ENCODE measurements at regions of chr5 and their contacts with region 1.

Region 1: GRCh38 chr5:44862808-44863207 is 54.1 kb downstream of the MRPS30 start:
- DNase-seq: peak; percentile 68
- ATAC-seq: peak; percentile 79
- H3K4me3 ChIP-seq: no peak overlapping the region
- H3K27ac ChIP-seq: no peak overlapping the region
- H3K4me1 ChIP-seq: no peaks in the 10 kb centered on the region
- H3K27me3 ChIP-seq: no peaks in the 10 kb centered on the region
- CTCF ChIP-seq: peak; percentile 90

Region 2: DNA sequence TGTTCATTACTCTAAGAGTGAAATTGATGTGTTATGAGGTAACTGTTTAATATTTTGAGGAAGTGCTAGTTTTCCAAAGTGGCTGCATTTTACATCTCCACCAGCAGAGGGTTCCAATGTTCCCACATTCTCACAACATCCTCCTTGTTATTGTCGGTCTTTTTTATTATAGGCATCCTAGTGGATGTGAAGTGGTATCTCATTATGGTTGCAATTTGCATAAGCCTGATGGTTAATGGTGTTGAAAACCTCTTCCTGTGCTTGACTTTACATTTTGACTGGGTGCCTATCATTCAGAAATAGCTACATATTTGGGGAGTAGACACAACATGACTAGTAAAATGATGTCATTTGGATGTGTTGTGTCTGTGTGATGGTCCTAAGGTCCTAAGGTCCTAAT is 89.6 kb after region 1 on chr5:
- CTCF ChIA-PET with region 1: interaction called, 3 read pairs
- POLR2A ChIA-PET with region 1: no interaction called
- intact Hi-C with region 1: loop called (anchors 1 kb)
- DNase-seq: peak; percentile 74
- ATAC-seq: peak; percentile 63
- H3K4me3 ChIP-seq: no peak overlapping the region
- H3K27ac ChIP-seq: no peak overlapping the region
- H3K4me1 ChIP-seq: no peaks in the 10 kb centered on the region
- H3K27me3 ChIP-seq: no peaks in the 10 kb centered on the region
- CTCF ChIP-seq: peak; percentile 93

Region 3: DNA sequence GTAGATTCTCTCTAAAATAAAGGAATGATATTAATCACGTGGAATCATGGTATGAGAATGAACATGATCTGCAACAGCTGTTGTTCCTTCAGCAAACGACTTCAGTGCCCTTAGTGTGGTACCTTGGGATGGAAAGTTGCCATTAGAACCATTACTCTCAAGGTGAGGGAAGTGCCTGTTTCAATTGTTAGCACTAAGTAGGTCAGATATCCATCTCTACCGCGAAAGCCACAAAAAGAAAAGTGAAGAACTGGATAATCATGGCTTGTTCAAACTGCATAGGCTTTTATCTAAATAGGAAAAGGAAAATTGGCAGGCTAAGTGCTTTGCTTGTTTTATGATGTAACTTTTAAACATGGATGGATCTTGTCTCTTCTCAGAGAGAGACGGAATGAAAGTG is 326.7 kb after region 1 on chr5:
- CTCF ChIA-PET with region 1: no interaction called
- POLR2A ChIA-PET with region 1: no interaction called
- intact Hi-C with region 1: loop called (anchors 10 kb)
- DNase-seq: no peak
- ATAC-seq: no peak
- H3K4me3 ChIP-seq: no peak overlapping the region
- H3K27ac ChIP-seq: no peak overlapping the region
- H3K4me1 ChIP-seq: no peaks in the 10 kb centered on the region
- H3K27me3 ChIP-seq: no peaks in the 10 kb centered on the region
- CTCF ChIP-seq: no peak

Region 4: GRCh38 chr5:45639038-45639437 is 776.2 kb after region 1 on chr5:
- CTCF ChIA-PET with region 1: no interaction called
- POLR2A ChIA-PET with region 1: no interaction called
- intact Hi-C with region 1: loop called (anchors 5 kb)
- DNase-seq: peak; percentile 36
- ATAC-seq: no peak
- H3K4me3 ChIP-seq: no peak overlapping the region
- H3K27ac ChIP-seq: no peak overlapping the region
- H3K4me1 ChIP-seq: no peaks in the 10 kb centered on the region
- H3K27me3 ChIP-seq: no peaks in the 10 kb centered on the region
- CTCF ChIP-seq: peak; percentile 57

Measured in PC-3 (cell line).